Activated CD4-positive, alpha-beta memory T cell treated with anti-CD3 and anti-CD28 coated beads for 36 hours (primary cell): ENCODE measurements at regions of chr2 and their contacts with region 1.

Region 1: DNA sequence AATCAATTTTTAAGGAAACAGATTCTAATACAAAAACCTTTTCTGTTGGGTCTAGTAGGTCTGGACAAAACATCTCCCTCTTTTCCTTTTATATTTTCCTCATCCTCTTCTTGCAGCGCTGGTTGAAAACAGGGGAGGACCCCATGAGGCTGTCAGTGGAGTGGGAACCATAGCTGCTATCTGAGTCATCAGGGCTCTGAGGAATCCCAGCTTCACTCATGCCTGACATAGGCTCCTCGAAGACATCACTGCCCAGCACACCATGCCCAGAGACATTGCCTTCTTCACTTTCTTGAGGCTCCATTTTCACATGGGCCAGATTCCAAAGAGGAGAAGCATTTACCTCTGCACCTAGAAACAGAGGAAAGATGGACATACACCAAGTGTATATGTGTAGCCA is 10.0 kb downstream of the SUPT7L start:
- DNase-seq: no peak
- H3K4me3 Mint-ChIP-seq: no peak overlapping the region
- H3K27ac Mint-ChIP-seq: peak overlapping the region; percentile 23
- H3K4me1 Mint-ChIP-seq: peaks cover 30% of the 10 kb centered on the region
- H3K27me3 Mint-ChIP-seq: no peaks in the 10 kb centered on the region

Region 2: GRCh38 chr2:27638037-27638637 is 15.3 kb before region 1 on chr2:
- CTCF ChIA-PET with region 1: no interaction called
- POLR2A ChIA-PET with region 1: interaction called, 4 read pairs
- intact Hi-C with region 1: loop called (anchors 1 kb)
- DNase-seq: no peak
- H3K4me3 Mint-ChIP-seq: peak overlapping the region; percentile 33
- H3K27ac Mint-ChIP-seq: peak overlapping the region; percentile 99
- H3K4me1 Mint-ChIP-seq: peaks cover 35% of the 10 kb centered on the region
- H3K27me3 Mint-ChIP-seq: no peaks in the 10 kb centered on the region

Region 3: GRCh38 chr2:27672723-27673486 is 19.5 kb after region 1 on chr2:
- CTCF ChIA-PET with region 1: no interaction called
- POLR2A ChIA-PET with region 1: no interaction called
- intact Hi-C with region 1: no loop called
- DNase-seq: no peak
- H3K4me3 Mint-ChIP-seq: no peak overlapping the region
- H3K27ac Mint-ChIP-seq: no peak overlapping the region
- H3K4me1 Mint-ChIP-seq: peaks cover 11% of the 10 kb centered on the region
- H3K27me3 Mint-ChIP-seq: no peaks in the 10 kb centered on the region